ENCODE measurements at regions of chr20 and their contacts with region 1.

Region 1: GRCh38 chr20:956330-956951 is 40.3 kb upstream of the ANGPT4 start:
- DNase-seq: peak; percentile 53 to 93
- H3K4me3 ChIP-seq: no peak overlapping the region
- H3K27ac ChIP-seq: no peak overlapping the region
- H3K4me1 ChIP-seq: peaks cover 0 to 3% (median under 1%) of the 10 kb centered on the region in 4 experiments; a peak in 3 of 7 replicates
- H3K27me3 ChIP-seq: peaks cover 0 to 3% (median 0%) of the 10 kb centered on the region in 4 experiments; a peak in 1 of 7 replicates
- CTCF ChIP-seq: peak; percentile 95 to 99 (median 98)
- EP300 ChIP-seq: no peak
- POLR2A ChIP-seq: no peak
- RAD21 ChIP-seq: peak; percentile 100

Region 2: DNA sequence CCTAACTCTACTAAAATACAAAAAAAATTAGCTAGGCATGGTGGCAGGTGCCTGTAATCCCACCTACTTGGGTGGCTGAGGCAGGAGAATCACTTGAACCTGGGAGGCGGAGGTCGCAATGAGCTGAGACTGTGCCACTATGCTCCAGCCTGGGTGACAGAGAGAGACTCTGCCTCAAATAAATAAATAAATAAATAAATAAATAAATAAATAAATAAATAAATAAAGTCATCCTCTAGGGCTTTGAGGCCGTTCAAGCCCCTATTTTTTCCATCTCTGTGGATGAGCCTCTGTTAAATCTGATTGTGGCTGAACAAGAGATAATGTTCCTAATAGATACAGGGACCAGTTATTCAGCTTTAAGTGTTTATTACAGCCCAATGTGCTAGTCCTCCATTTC is 154.8 kb before region 1 on chr20:
- CTCF ChIA-PET with region 1: interaction called, 10 read pairs
- POLR2A ChIA-PET with region 1: no interaction called
- DNase-seq: no peak
- H3K4me3 ChIP-seq: no peak overlapping the region
- H3K27ac ChIP-seq: no peak overlapping the region
- H3K4me1 ChIP-seq: no peaks in the 10 kb centered on the region
- H3K27me3 ChIP-seq: no peaks in the 10 kb centered on the region
- CTCF ChIP-seq: no peak
- EP300 ChIP-seq: no peak
- POLR2A ChIP-seq: no peak
- RAD21 ChIP-seq: no peak

Region 3: GRCh38 chr20:833450-834150 is 122.8 kb before region 1 on chr20 and contains the start of gene FAM110A:
- CTCF ChIA-PET with region 1: interaction called, 30 read pairs
- POLR2A ChIA-PET with region 1: no interaction called
- DNase-seq: peak; percentile 70 to 93
- H3K4me3 ChIP-seq: peak within 1 kb of the TSS; percentile 42 to 76 (median 70)
- H3K27ac ChIP-seq: peak within 1 kb of the TSS; percentile 87; the same call in 1 of the 2 replicates
- H3K4me1 ChIP-seq: peaks cover 0 to 3% (median 1%) of the 10 kb centered on the region in 4 experiments; a peak in 1 of 7 replicates
- H3K27me3 ChIP-seq: peaks cover 0 to 15% (median 13%) of the 10 kb centered on the region in 4 experiments; a peak in 6 of 7 replicates
- CTCF ChIP-seq: no peak
- EP300 ChIP-seq: peak in 1 of 2 experiments; percentile 96; a peak in 2 of 3 replicates
- POLR2A ChIP-seq: no peak
- RAD21 ChIP-seq: no peak; a peak in 1 of 4 replicates
- total RNA-seq, gene FAM110A: 10.9 and 13.1 TPM in 2 replicates

Region 4: DNA sequence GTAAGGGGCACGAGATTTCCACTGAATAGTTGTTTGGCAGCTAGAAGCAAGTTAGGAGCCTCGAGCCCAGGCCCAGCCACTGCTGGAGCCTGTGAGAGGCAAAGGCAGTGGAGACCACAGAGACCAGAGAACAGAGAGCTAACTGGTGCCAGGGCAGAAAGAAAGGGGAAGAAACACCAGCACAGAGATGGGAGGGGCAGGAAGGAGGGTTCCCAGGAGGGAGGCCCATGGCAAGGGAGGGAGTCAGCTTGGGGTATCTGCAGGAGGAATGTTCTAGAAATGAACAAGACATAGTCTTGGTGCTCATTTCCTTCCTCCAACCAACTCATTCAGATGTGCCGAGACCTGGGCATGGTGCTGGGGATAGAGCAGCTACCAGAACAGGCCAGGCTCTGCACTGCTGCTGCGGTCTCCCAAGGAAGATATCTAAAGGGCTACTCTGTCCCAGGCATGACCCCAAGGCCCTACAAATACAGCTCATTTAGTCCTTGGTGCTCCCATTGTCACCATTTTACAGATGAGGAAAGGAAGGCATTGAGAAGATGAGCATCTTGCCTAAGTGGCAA is 51.0 kb before region 1 on chr20:
- CTCF ChIA-PET with region 1: interaction called, 79 read pairs
- POLR2A ChIA-PET with region 1: no interaction called
- DNase-seq: no peak
- H3K4me3 ChIP-seq: no peak overlapping the region
- H3K27ac ChIP-seq: no peak overlapping the region
- H3K4me1 ChIP-seq: peaks cover 0 to 4% (median 0%) of the 10 kb centered on the region in 4 experiments; a peak in 2 of 7 replicates
- H3K27me3 ChIP-seq: no peaks in the 10 kb centered on the region
- CTCF ChIP-seq: no peak
- EP300 ChIP-seq: no peak
- POLR2A ChIP-seq: no peak
- RAD21 ChIP-seq: no peak

Region 5: DNA sequence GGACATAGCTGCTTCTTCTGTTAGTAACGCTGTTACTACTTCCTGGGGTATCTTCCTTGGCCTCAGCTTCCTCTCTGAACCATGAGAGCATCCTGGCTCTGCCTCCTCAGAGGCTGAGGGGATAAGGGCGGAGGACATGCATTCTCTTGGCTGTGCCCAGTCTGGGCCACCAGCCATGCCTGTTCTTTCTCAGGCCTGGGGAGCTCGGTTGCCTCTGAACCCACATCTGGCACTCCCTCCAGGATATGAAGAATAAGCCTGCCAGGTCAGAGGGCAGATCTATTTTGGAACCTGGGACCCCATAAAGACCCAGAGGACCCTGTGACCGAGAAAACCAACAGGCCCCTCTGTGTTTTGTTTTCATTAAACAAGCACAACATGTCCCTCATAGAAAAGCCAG is 33.7 kb before region 1 on chr20:
- CTCF ChIA-PET with region 1: interaction called, 36 read pairs
- POLR2A ChIA-PET with region 1: interaction called, 3 read pairs
- DNase-seq: no peak
- H3K4me3 ChIP-seq: no peak overlapping the region
- H3K27ac ChIP-seq: no peak overlapping the region
- H3K4me1 ChIP-seq: no peaks in the 10 kb centered on the region
- H3K27me3 ChIP-seq: no peaks in the 10 kb centered on the region
- CTCF ChIP-seq: no peak
- EP300 ChIP-seq: no peak
- POLR2A ChIP-seq: no peak
- RAD21 ChIP-seq: no peak

Region 6: GRCh38 chr20:973785-974194 is 17.3 kb after region 1 on chr20:
- CTCF ChIA-PET with region 1: interaction called, 155 read pairs
- POLR2A ChIA-PET with region 1: no interaction called
- DNase-seq: no peak
- H3K4me3 ChIP-seq: no peak overlapping the region
- H3K27ac ChIP-seq: no peak overlapping the region
- H3K4me1 ChIP-seq: no peaks in the 10 kb centered on the region
- H3K27me3 ChIP-seq: no peaks in the 10 kb centered on the region
- CTCF ChIP-seq: peak; percentile 60 to 76 (median 67)
- EP300 ChIP-seq: no peak
- POLR2A ChIP-seq: no peak
- RAD21 ChIP-seq: peak; percentile 72 to 74

Region 7: GRCh38 chr20:1010659-1011058 is 54.2 kb after region 1 on chr20:
- CTCF ChIA-PET with region 1: no interaction called
- POLR2A ChIA-PET with region 1: no interaction called
- DNase-seq: no peak
- H3K4me3 ChIP-seq: no peak overlapping the region
- H3K27ac ChIP-seq: no peak overlapping the region
- H3K4me1 ChIP-seq: no peaks in the 10 kb centered on the region
- H3K27me3 ChIP-seq: no peaks in the 10 kb centered on the region
- CTCF ChIP-seq: no peak
- EP300 ChIP-seq: no peak
- POLR2A ChIP-seq: no peak
- RAD21 ChIP-seq: no peak

Measured in H1 (cell line).